A549 (cell line): ENCODE measurements at regions of chr15 and their contacts with region 1.

Region 1: DNA sequence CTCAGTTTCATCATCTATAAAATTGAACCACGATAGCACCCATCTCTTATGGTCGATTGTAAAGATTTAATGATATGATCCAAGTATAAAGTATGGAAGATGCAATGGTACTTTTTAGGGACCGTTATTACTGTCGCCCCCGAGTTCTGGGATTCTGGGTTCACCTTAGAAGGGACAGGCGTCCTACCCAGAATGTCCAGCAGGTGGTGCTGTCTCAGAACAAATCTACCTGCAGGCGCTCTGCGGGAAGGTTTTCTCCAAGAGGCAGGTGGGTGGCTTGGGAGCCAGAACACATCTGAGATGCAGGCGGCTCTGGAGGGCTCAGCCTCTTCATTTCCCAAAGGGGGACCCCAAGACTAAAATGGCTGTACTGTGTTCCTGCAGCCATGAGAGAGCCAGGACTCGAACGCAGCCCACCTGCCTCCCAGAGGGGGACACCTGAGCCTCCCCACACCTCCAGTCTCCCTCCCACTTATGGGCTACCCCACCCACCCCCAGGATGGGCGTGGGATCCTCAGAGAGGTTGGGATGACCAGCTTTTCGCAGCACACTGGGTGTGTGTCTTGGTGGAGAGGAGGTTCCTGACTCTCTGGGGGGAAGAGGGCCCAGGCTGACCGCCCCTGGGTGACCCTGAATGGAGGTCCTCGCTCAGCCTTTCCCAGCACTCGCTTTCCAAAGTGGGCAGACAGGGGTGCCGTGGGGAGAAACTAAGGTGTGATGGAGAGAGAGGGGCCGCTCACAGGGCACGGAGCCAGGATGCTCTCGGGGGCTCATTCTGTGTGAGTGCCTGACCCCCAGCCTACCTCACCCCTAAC is 28.1 kb upstream of the CORO2B start:
- DNase-seq: peak; percentile 66 to 71
- ATAC-seq: peak; percentile 41 to 68; a peak in 4 of 6 replicates
- H3K4me3 ChIP-seq: no peak overlapping the region
- H3K27ac ChIP-seq: peak overlapping the region; percentile 51 to 64; a peak in 5 of 6 replicates
- H3K4me1 ChIP-seq: peaks cover 26% of the 10 kb centered on the region
- CTCF ChIP-seq: peak; percentile 97
- EP300 ChIP-seq: no peak
- POLR2A ChIP-seq: no peak
- RAD21 ChIP-seq: peak; percentile 79 to 85

Region 2: DNA sequence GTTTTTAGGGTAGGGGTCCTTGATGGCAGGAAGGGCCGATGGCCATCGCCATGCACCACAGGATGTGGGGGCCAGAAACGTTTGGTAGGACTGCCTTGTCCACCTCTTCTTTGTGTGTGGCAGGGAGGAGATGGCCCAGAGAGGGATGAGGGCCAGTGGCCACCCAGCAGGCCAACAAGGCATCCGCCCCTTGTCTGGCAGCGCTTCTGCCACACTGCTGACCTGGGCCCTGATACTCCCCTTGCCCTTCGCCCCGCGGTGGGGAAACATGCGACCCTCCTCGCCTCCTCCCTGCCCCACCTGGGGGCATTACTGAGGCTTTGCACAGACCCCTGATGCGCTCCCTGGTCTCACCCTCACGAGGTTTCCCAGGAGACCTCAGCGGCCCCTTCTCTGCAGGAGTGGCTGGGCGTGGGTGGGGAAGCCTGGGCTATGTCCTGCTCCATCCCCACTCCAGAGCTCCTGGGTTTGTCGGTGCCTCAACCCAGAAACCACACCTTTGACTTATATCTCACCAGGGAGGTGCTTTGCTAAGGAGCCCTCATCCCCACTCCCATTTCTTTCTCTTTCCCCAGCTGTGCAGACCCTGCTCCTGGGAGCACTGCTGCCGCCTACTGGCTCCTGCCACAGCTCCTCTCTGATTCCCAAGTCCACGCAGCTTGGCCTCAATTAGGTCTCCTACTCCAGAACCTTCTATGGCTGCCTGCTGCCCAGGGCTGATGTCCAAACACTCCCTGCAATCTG is 234.5 kb before region 1 on chr15:
- CTCF ChIA-PET with region 1: interaction called, 23 read pairs
- POLR2A ChIA-PET with region 1: no interaction called
- DNase-seq: peak in 1 of 2 experiments; percentile 33
- ATAC-seq: peak; percentile 39 to 75; a peak in 4 of 6 replicates
- H3K4me3 ChIP-seq: no peak overlapping the region
- H3K27ac ChIP-seq: peak overlapping the region in 1 of 2 experiments; percentile 25; a peak in 1 of 6 replicates
- H3K4me1 ChIP-seq: no peaks in the 10 kb centered on the region
- CTCF ChIP-seq: peak; percentile 55
- EP300 ChIP-seq: no peak
- POLR2A ChIP-seq: no peak
- RAD21 ChIP-seq: peak; percentile 45 to 51; a peak in 4 of 5 replicates

Region 3: GRCh38 chr15:68449389-68449788 is 101.3 kb before region 1 on chr15:
- CTCF ChIA-PET with region 1: no interaction called
- POLR2A ChIA-PET with region 1: no interaction called
- DNase-seq: no peak
- ATAC-seq: no peak
- H3K4me3 ChIP-seq: no peak overlapping the region
- H3K27ac ChIP-seq: no peak overlapping the region
- H3K4me1 ChIP-seq: no peaks in the 10 kb centered on the region
- CTCF ChIP-seq: no peak
- EP300 ChIP-seq: no peak
- POLR2A ChIP-seq: no peak
- RAD21 ChIP-seq: no peak

Region 4: DNA sequence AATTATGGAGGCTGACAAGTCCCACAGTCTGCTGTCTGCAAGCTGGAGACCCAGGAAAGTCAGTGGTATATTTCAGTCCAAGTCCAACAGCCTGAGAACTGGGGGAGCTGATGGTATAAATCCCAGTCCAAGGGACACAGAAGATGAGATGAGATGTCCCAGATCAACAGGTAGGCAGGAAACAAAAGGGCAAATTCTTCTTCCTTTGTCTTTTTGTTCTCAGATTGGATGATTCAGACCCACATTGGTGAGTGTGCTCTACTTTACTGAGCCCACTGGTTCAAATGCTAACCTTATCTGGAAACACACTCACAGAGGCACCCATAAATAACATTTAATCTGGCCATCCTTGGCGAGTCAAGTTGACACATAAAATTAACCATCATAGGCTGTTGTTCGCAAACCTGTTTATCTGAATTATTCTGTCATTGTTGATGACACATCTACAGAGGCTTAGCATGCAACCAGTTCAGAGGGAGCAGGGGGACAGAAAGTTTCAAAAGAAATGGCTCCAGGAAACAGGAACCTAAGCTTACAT is 56.0 kb before region 1 on chr15:
- CTCF ChIA-PET with region 1: interaction called, 11 read pairs
- POLR2A ChIA-PET with region 1: no interaction called
- DNase-seq: no peak
- ATAC-seq: no peak
- H3K4me3 ChIP-seq: no peak overlapping the region
- H3K27ac ChIP-seq: peak overlapping the region; percentile 27 to 61; a peak in 5 of 6 replicates
- H3K4me1 ChIP-seq: peaks cover 44% of the 10 kb centered on the region
- CTCF ChIP-seq: no peak
- EP300 ChIP-seq: no peak
- POLR2A ChIP-seq: no peak
- RAD21 ChIP-seq: no peak

Region 5: DNA sequence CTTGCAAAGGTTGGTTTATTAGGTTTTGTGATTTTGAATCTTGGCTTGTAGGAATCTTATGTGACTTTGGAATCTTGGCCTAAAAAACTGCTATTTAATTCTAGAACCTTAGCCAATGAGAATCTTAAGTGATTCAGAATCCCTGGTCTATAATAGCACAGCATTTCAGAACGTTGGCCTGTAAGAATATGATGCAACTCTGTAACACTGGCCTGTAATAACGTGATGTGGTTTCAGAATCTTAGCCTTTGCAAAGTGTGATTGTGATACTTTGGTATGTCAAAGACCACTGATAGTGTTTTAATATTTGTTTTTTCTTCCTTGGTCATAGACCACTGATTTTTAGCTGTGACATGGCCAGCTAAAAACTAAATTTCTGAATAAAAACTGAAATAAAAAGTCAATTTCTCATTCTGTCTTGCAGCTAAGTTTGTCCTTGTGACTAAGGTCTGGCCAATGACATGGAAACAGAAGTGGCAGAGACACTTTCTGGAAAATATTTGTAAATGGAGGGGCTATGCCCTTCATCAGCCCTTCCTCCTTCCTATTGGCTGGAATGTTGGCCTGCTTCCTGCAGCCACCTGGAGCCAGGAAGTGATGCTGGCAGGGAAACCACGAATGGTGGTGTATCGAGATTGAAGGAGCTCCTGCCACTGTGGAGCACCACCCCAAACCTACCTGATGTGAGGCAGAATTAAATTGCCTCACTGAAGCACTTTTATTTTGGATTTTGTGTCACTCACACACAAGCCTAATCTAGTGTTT is 14.2 kb before region 1 on chr15:
- CTCF ChIA-PET with region 1: interaction called, 413 read pairs
- POLR2A ChIA-PET with region 1: no interaction called
- DNase-seq: no peak
- ATAC-seq: peak in 1 of 2 experiments; percentile 62; a peak in 1 of 6 replicates
- H3K4me3 ChIP-seq: no peak overlapping the region
- H3K27ac ChIP-seq: peak overlapping the region; percentile 15 to 55; a peak in 5 of 6 replicates
- H3K4me1 ChIP-seq: peaks cover 15% of the 10 kb centered on the region; the same call in 1 of the 3 replicates
- CTCF ChIP-seq: no peak
- EP300 ChIP-seq: no peak
- POLR2A ChIP-seq: no peak
- RAD21 ChIP-seq: no peak

Region 6: DNA sequence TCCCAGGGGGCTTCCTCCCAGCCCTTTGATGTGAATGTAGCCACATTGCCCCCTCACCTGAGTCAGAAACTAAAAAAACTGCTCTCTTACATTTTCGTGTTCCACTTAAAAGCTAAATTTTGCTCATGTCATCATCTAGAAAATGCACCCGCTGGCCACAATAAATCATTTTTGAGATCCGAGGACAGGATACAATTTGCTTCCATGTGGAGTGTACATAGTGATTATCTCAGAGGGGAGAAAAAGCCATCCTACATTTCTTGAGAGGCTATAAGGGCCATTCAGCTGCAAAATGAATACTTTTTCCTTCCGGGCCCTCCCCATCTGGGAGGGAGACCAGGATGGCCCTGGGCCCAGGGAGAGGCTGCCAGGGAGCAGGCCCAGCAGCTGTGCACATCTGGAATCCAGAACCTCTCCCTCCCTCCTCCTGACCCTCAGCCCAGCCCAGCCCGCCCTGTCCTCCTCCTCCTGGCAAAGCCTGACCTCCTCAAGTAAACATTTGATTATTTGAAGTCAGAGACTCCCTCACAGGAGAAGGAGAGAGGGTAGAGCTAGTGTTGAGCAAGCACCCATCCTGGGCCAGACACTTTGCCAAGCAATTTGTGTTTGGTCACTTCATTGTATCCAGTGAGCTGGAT is 87.2 kb after region 1 on chr15:
- CTCF ChIA-PET with region 1: interaction called, 12 read pairs
- POLR2A ChIA-PET with region 1: no interaction called
- DNase-seq: no peak
- ATAC-seq: no peak
- H3K4me3 ChIP-seq: no peak overlapping the region
- H3K27ac ChIP-seq: no peak overlapping the region
- H3K4me1 ChIP-seq: peaks cover 11% of the 10 kb centered on the region; the same call in 1 of the 3 replicates
- CTCF ChIP-seq: no peak
- EP300 ChIP-seq: no peak
- POLR2A ChIP-seq: no peak
- RAD21 ChIP-seq: no peak

Region 7: GRCh38 chr15:68924866-68925560 is 374.3 kb after region 1 on chr15:
- CTCF ChIA-PET with region 1: interaction called, 35 read pairs
- POLR2A ChIA-PET with region 1: no interaction called
- DNase-seq: peak; percentile 78 to 90
- ATAC-seq: peak; percentile 96 to 98
- H3K4me3 ChIP-seq: no peak overlapping the region
- H3K27ac ChIP-seq: no peak overlapping the region
- H3K4me1 ChIP-seq: no peaks in the 10 kb centered on the region
- CTCF ChIP-seq: peak; percentile 97
- EP300 ChIP-seq: no peak
- POLR2A ChIP-seq: no peak
- RAD21 ChIP-seq: peak; percentile 96 to 98